AG04450 (cell line): ENCODE measurements at regions of chr10 and their contacts with region 1.

Region 1: DNA sequence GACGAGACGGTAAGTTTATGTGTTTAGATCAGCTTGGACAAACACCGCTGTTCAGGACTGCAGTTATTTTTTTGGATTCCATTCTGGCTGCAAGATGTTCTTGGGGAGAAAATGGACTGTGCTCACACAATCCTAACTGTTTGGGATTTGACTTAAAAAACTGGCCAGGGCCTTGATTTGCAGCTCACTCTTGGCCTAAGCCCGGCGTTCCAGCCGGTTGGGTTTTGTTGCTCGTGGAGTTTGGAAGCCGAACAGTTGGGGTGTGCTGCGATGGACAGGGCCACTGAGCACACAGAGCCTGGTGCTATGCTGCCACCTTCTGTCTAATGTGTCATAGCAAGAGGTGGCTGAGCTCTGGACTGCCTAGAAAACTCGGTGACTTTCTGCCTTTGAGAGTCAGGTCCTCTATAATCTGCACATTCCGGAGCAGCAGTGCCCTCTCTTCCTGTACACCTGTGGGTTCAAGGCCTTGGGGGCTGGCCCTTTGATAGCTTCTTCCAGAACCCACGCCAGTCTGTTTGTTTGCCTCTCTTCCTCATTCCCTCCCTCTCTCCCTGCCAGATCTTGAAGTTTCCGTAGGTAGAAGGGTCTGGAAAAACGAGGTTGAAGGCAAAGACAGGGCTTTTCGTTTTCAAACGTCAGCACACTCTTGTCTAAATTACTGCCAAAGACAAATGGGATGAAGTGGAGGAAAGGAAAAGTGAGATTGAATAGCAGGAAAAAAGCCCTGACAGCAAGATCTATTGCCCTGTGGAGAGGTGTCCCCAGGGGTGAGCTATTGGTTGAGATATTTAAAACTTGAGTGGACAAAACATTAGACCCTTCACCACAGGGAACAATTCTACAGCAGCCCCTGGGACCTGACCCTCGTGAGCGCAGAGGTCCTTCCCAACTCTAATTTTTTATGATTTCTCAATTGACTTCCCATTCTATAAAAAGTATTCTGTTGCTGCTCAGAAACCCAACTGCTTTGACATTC is 167.5 kb upstream of the HABP2 start:
- DNase-seq: peak; percentile 63
- H3K4me3 ChIP-seq: no peak overlapping the region
- H3K27ac ChIP-seq: peak overlapping the region; percentile 21
- H3K27me3 ChIP-seq: peaks cover 7% of the 10 kb centered on the region
- CTCF ChIP-seq: peak; percentile 89

Region 2: DNA sequence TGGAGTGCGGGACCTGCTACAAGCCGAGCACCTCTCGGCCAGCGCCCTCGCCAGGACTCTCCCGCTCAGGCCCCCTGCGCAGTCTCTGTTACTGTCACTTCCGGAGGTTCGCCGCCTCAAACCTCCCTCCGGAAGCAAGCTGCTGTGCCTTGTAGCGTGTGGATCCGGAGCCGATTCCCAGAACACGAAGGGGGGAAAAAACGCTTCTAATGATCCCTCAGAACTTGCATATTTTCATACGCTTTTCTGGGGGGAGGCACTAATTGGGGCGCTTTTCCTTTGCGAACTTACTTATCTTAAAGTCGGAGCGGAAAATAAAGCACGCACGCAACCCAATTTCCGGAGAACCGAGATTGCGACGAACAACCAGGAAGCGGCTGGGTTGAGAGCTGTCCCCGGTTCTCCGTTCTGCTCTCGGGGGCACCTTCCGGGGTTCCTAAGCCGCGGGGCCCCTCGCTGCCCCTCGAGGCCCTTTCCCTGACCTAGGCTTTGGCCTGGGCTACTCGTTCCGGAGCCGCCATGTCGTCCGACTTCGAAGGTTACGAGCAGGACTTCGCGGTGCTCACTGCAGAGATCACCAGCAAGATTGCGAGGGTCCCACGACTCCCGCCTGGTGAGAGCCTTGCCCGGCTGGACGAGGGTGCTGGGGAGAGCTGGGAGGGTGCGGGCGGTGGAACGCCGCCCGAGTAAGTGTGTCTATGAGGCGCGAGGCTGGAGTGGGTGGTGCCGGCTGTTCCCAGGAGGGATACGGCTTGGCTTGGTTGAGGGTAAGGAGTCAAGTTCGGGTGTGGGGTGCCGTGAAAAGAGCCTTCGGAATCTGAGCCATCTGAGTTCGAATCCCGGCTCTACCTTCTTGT is 938.2 kb before region 1 on chr10 and contains the starts of genes VTI1A and ZDHHC6:
- CTCF ChIA-PET with region 1: interaction called, 11 read pairs
- POLR2A ChIA-PET with region 1: no interaction called
- DNase-seq: peak; percentile 61
- H3K4me3 ChIP-seq: peak within 1 kb of the TSS; percentile 99
- H3K27ac ChIP-seq: peak within 1 kb of the TSS; percentile 92
- H3K27me3 ChIP-seq: no peaks in the 10 kb centered on the region
- CTCF ChIP-seq: peak; percentile 43
- polyA plus RNA-seq, gene VTI1A: 17.1 and 20.4 TPM in 2 replicates
- polyA plus RNA-seq, gene ZDHHC6: 26.2 and 37.5 TPM in 2 replicates

Region 3: GRCh38 chr10:112526139-112526538 is 859.2 kb before region 1 on chr10:
- CTCF ChIA-PET with region 1: interaction called, 21 read pairs
- POLR2A ChIA-PET with region 1: no interaction called
- DNase-seq: no peak
- H3K4me3 ChIP-seq: no peak overlapping the region
- H3K27ac ChIP-seq: no peak overlapping the region
- H3K27me3 ChIP-seq: no peaks in the 10 kb centered on the region
- CTCF ChIP-seq: no peak

Region 4: GRCh38 chr10:112565434-112566053 is 819.8 kb before region 1 on chr10:
- CTCF ChIA-PET with region 1: interaction called, 15 read pairs
- POLR2A ChIA-PET with region 1: no interaction called
- DNase-seq: peak; percentile 32
- H3K4me3 ChIP-seq: no peak overlapping the region
- H3K27ac ChIP-seq: no peak overlapping the region
- H3K27me3 ChIP-seq: no peaks in the 10 kb centered on the region
- CTCF ChIP-seq: peak; percentile 82

Region 5: DNA sequence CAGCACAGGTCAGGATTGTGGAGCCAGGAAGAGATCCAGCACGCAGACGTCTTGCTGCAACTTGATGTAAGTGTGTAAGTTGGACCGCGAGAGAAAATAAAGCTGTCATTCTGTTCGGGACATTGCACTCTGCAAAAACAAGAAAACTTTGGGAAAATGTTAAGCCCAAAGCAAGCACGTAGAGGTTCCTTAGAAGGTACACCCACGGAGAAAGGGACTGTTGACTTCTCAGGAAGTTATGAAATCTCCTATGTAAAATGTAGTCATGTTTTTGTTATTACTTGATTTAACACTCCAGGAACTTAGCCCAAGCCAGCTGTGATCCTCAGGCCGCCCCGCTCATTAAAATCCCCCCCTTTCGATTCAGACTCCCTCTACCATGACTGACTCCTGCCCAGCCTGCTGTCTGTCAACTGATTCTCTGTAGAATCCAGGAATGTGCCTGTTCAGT is 631.3 kb before region 1 on chr10:
- CTCF ChIA-PET with region 1: interaction called, 10 read pairs
- POLR2A ChIA-PET with region 1: no interaction called
- DNase-seq: no peak
- H3K4me3 ChIP-seq: no peak overlapping the region
- H3K27ac ChIP-seq: peak overlapping the region; percentile 52
- H3K27me3 ChIP-seq: no peaks in the 10 kb centered on the region
- CTCF ChIP-seq: no peak

Region 6: GRCh38 chr10:113126229-113127201 is 258.8 kb before region 1 on chr10:
- CTCF ChIA-PET with region 1: interaction called, 19 read pairs
- POLR2A ChIA-PET with region 1: no interaction called
- DNase-seq: peak; percentile 27
- H3K4me3 ChIP-seq: peak overlapping the region; percentile 48
- H3K27ac ChIP-seq: no peak overlapping the region
- H3K27me3 ChIP-seq: no peaks in the 10 kb centered on the region
- CTCF ChIP-seq: peak; percentile 41

Region 7: DNA sequence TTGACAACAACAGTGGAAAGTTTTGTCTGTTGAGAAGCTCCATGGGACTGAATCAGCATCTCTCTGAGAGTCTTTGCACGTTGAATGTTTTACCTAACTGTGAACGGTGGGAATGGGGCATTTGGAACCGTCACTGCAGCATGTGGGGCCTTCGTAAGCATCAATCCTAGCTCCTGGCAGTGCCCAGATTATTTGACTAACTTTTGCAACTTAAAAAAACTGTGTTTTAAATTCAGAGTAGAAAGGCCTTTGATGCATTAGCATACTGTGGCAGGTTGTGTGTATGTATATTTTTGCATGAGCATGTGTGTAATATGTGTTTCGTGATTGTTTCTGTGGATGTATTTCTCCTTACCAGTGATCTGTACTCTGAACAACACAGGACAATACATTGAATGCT is 240.7 kb before region 1 on chr10:
- CTCF ChIA-PET with region 1: interaction called, 10 read pairs
- POLR2A ChIA-PET with region 1: no interaction called
- DNase-seq: no peak
- H3K4me3 ChIP-seq: no peak overlapping the region
- H3K27ac ChIP-seq: no peak overlapping the region
- H3K27me3 ChIP-seq: no peaks in the 10 kb centered on the region
- CTCF ChIP-seq: no peak

Region 8: GRCh38 chr10:113232928-113233511 is 152.3 kb before region 1 on chr10:
- CTCF ChIA-PET with region 1: no interaction called
- POLR2A ChIA-PET with region 1: no interaction called
- DNase-seq: no peak
- H3K4me3 ChIP-seq: no peak overlapping the region
- H3K27ac ChIP-seq: no peak overlapping the region
- H3K27me3 ChIP-seq: peaks cover 6% of the 10 kb centered on the region
- CTCF ChIP-seq: no peak